ENCODE measurements at regions of chr2 and their contacts with region 1.

Region 1: GRCh38 chr2:72841462-72842125 is 15.8 kb upstream of the EXOC6B start:
- DNase-seq: no peak

Region 2: DNA sequence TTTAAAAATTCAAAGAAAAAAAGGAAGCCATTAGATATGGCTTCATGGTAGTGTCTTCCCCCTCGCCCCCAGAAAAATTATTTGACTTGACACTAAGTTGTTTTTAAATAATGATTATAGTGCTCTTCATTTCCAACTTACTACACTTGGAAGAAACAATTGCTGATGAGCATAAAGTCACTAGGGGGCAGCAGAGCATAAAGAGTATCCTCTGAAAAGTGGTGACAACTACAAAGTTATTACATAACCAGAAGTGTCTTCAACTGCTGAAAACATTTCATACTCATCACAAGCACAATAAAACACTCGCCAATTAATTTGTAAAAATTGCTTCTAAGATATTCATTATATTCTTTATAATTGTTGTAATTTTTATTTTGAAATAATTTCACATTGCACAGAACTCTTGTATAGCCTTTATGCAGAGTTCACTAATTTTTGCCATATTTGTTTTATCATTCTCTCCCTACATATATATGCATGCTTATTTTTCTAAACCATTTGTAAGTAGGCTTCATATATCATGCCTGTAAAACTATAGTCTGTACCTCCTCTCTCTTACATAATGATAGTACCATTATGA is 70.6 kb before region 1 on chr2:
- CTCF ChIA-PET with region 1: interaction called, 10 read pairs
- POLR2A ChIA-PET with region 1: no interaction called
- DNase-seq: peak; percentile 62